Endothelial cell of umbilical vein (primary cell): ENCODE measurements at regions of chr20 and their contacts with region 1.

Region 1: DNA sequence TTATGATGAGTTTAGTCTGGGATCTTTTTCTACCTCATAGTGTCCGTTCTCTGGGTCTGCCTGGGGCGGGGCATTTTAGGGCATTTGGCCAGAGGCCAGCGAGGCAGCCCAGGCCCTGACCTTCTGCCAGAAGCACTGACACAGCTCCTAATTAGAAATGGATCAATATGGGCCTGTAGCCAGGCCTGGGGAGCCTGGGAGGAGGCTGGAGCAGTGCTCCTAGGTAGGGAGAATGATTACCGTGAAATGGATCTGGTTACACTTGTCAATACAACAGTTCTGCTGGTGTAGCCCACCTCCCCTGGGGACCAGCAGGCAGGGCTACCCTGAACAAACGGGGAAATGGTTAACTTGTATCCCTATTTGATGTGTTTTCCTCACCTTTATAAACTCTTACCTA is 23.0 kb downstream of the RALY start:
- DNase-seq: no peak
- H3K4me3 ChIP-seq: no peak overlapping the region
- H3K27ac ChIP-seq: no peak overlapping the region
- H3K4me1 ChIP-seq: no peaks in the 10 kb centered on the region
- H3K27me3 ChIP-seq: no peaks in the 10 kb centered on the region
- CTCF ChIP-seq: no peak
- POLR2A ChIP-seq: no peak

Region 2: DNA sequence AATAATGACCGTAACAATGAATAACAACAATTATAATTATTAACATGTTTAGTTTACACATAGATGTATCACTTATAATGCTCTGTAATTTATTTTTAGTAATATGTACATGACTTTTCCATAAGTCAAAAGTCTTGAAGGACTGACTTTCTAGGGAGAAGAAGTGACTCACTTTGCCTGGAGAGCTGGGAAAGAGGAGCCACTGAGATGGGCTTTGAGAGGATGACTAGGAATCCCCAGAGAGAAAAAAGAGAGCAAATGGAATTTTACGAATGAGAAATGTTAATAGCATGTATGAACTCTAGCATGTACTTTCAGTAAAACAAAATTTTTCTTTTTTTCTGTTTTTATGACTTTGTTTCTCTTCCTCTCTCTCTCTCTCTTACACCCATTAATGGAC is 90.9 kb before region 1 on chr20:
- CTCF ChIA-PET with region 1: no interaction called
- POLR2A ChIA-PET with region 1: no interaction called
- dilution Hi-C with region 1: no loop called
- intact Hi-C with region 1: no loop called
- DNase-seq: no peak
- H3K4me3 ChIP-seq: no peak overlapping the region
- H3K27ac ChIP-seq: no peak overlapping the region
- H3K4me1 ChIP-seq: no peaks in the 10 kb centered on the region
- H3K27me3 ChIP-seq: peaks cover 8 to 12% of the 10 kb centered on the region in 2 experiments
- CTCF ChIP-seq: no peak
- POLR2A ChIP-seq: no peak

Region 3: GRCh38 chr20:33983371-33983770 is 33.4 kb before region 1 on chr20:
- CTCF ChIA-PET with region 1: interaction called, 3 read pairs
- POLR2A ChIA-PET with region 1: interaction called, 12 read pairs
- dilution Hi-C with region 1: no loop called
- intact Hi-C with region 1: no loop called
- DNase-seq: no peak
- H3K4me3 ChIP-seq: no peak overlapping the region
- H3K27ac ChIP-seq: no peak overlapping the region
- H3K4me1 ChIP-seq: no peaks in the 10 kb centered on the region
- H3K27me3 ChIP-seq: peaks cover 11 to 16% of the 10 kb centered on the region in 2 experiments
- CTCF ChIP-seq: no peak
- POLR2A ChIP-seq: no peak